Right lobe of liver (tissue), 6 donors: ENCODE measurements at regions of chr1 and their contacts with region 1.

Region 1: DNA sequence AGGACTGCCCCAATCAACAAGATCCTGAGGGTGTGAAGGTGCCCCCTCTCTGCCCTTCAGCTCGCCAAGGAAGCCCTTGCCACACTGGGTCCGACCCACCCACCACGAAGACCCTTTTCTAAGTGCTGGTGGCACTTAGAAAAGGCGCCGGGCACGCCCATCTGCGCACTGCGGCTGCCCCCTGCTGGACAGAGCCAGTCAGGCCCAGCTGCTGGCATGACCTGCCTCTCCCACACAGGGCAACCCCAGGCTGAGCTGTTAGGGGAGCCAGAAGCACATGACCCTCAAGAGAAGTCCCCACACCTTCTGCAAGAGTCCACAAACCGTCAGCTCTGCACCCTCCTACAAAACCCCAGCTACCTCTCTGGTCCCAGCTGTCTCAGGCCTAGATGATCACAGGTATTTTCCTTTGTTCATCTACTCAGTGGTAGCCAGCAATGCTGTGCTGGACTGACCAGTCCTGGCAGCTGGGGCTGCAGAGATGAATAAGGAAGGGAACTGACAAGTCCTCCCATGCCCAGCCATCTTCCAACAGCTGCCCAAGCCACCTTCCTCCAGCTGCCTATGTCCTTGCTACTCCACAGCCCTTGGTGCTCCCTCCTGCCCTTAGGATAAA is 40.0 kb upstream of the ZC3H12A start:
- DNase-seq: peak; percentile 75 to 78 (median 78)
- ATAC-seq: peak; percentile 84 to 91 (median 88)
- H3K4me3 ChIP-seq: no peak overlapping the region
- H3K27ac ChIP-seq: no peak overlapping the region
- H3K4me1 ChIP-seq: no peaks in the 10 kb centered on the region
- H3K27me3 ChIP-seq: no peaks in the 10 kb centered on the region
- CTCF ChIP-seq: peak; percentile 87 to 94 (median 92)
- POLR2A ChIP-seq: no peak

Region 2: GRCh38 chr1:36576118-36576517 is 858.3 kb before region 1 on chr1:
- intact Hi-C with region 1: loop called (anchors 10 kb)
- DNase-seq: peak; percentile 49 to 67 (median 53)
- ATAC-seq: peak; percentile 67 to 81 (median 70)
- H3K4me3 ChIP-seq: no peak overlapping the region
- H3K27ac ChIP-seq: no peak overlapping the region
- H3K4me1 ChIP-seq: no peaks in the 10 kb centered on the region
- H3K27me3 ChIP-seq: no peaks in the 10 kb centered on the region
- CTCF ChIP-seq: peak; percentile 56 to 79 (median 74)
- POLR2A ChIP-seq: no peak

Region 3: DNA sequence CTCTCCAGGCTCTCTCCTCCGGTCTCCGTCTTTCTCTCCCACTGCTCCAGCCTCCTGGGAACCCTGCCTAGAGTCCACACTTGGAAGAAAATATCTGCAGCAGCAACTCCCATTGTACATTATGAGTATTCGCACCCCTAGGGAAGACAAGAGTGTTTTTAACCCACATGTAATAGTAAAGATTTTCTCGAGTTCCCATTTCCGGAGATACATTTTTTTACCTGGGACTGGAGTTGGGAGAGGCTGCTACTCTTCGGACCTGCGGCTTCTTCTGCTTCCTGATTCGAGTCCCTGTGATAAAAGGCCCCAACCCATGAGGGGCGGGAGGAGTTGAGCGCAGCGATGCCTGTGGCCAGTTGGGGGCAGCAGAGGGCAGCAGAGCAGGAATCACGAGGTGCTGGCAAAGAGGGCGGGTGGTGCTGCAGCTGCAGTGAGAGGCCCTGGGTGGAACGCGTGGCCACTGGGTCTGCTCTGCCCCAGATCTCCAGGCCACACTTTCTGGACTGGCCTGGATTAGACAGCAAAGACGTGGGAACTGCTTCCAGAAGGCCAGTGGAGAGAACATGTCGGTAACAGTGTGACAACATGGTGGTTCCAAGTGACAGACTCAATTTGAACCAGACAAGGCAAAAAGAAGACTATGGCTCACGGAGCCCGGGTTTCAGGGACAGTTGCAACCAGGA is 730.7 kb before region 1 on chr1:
- intact Hi-C with region 1: loop called (anchors 10 kb)
- DNase-seq: peak; percentile 71 to 78 (median 74)
- ATAC-seq: peak; percentile 92 to 97 (median 94)
- H3K4me3 ChIP-seq: no peak overlapping the region
- H3K27ac ChIP-seq: no peak overlapping the region
- H3K4me1 ChIP-seq: no peaks in the 10 kb centered on the region
- H3K27me3 ChIP-seq: no peaks in the 10 kb centered on the region
- CTCF ChIP-seq: peak; percentile 65 to 91 (median 87)
- POLR2A ChIP-seq: no peak

Region 4: DNA sequence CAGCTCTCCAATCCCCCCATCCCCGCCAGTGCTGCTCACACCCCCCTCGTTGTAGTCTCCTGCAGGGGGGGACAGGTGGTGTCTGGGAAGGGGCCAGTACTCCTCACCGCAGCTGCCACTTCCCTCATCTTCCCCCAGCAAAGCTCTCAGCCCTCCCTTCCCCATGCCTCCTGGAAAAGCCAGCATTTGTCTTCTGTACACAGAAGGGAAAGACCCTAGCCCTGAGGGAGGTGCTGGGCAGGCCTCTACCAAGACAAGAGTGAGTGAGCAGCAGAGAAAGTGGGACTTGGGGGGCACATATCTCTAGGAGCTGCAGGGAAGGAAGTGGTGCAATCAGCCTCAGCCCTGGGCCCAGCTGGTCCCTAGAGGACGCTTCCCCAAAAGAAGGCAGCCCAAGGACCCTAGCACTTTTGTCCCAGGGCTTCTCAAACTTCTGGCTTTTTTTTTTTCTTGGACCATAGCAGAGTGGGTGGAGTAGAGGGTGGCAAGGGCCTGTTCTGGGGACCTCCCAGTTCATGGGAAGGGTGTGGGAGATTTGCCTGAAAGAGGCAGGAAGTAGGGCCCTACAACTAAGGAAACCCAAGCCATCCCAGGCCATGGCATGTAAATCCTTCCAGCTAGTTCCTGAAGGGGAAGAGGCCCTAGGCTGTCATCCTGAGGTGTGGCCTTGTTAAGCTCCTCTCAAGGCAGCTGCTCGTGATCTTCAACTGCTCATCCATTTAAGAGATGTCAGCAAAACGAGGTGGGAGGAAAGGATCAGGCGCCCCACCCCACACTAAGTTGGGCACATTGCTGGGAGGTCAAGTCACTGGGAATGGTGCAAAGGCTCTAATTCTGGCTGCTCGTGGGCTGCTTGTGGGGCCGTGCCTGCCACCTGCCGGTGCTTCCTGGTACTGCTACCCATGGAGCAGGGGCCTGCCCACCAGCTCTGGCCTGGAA is 52.5 kb after region 1 on chr1:
- intact Hi-C with region 1: no loop called
- DNase-seq: peak; percentile 74 to 81 (median 77)
- ATAC-seq: peak; percentile 77 to 92 (median 88)
- H3K4me3 ChIP-seq: no peak overlapping the region
- H3K27ac ChIP-seq: peak overlapping the region in 2 of 3 donors; percentile 20 to 47
- H3K4me1 ChIP-seq: peaks cover 0 to 30% (median 0%) of the 10 kb centered on the region in 4 donors
- H3K27me3 ChIP-seq: no peaks in the 10 kb centered on the region
- CTCF ChIP-seq: peak; percentile 97 to 99 (median 99)
- POLR2A ChIP-seq: no peak

Region 5: DNA sequence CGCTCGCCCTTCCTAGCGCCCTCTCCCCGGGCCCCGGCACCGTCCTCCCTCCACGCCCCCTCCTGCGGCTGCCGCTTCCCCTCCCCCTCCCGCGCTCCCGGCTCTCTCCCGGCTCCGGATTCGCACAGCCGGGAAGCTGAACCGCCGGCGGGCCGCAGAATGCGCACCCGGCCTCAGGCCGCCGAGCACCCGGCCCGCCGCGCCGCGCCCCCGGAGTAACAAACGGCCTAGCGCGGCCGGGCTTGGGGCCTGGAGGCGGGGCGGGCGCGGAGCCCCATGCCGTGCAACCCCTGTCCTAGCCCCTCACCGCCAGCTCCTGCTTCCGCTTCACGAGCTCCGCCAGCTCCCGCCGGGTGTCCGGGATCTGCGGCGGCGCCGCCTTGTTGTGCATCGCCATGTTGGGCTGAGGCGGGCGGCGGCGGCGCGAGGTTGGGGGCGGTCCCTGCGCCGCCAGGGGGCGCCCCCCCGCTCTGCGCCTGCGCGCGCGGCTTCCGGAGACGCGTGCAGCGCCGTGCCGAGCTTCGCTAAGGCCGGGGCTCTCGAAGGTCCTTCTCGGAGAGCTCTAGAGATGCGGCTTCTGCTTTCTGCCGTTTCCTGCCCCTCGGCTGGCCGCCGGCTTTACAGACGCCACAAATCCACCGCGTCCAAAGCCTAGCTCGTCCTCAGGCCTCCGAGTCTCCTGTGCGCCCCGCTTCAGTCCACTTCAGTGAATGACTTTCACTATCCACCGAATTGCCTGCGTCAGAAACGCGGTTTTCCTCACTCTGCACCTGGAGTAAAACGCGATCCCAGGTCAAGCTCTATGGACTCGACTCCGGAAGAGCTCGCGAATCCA is 80.2 kb after region 1 on chr1 and contains the start of gene MEAF6:
- intact Hi-C with region 1: no loop called
- DNase-seq: peak; percentile 87 to 89 (median 88)
- ATAC-seq: peak; percentile 93 to 97 (median 94)
- H3K4me3 ChIP-seq: peak within 1 kb of the TSS; percentile 83 to 90 (median 89)
- H3K27ac ChIP-seq: peak within 1 kb of the TSS; percentile 94 to 98 (median 95)
- H3K4me1 ChIP-seq: peaks cover 0 to 24% (median 6%) of the 10 kb centered on the region in 4 donors
- H3K27me3 ChIP-seq: no peaks in the 10 kb centered on the region
- CTCF ChIP-seq: peak; percentile 54 to 87 (median 74)
- POLR2A ChIP-seq: peak; percentile 96
- total RNA-seq, gene MEAF6: 12.9 to 55.9 (median 32.8) TPM